ENCODE measurements at regions of chr16 and their contacts with region 1.

Region 1: GRCh38 chr16:4475880-4476788 is at the start of gene HMOX2:
- DNase-seq: peak; percentile 96
- ATAC-seq: peak; percentile 93
- H3K4me3 ChIP-seq: peak within 1 kb of the TSS; percentile 57 to 96 (median 86)
- H3K4me3 Mint-ChIP-seq: peak within 1 kb of the TSS; percentile 84
- H3K27ac ChIP-seq: peak within 1 kb of the TSS; percentile 28 to 78
- H3K27ac Mint-ChIP-seq: peak within 1 kb of the TSS; percentile 92
- H3K4me1 ChIP-seq: peaks cover 19 to 37% of the 10 kb centered on the region in 2 donors
- H3K4me1 Mint-ChIP-seq: peaks cover 34% of the 10 kb centered on the region
- H3K27me3 ChIP-seq: no peaks in the 10 kb centered on the region
- H3K27me3 Mint-ChIP-seq: no peaks in the 10 kb centered on the region
- CTCF ChIP-seq: peak; percentile 56
- total RNA-seq, gene HMOX2: 36.5 TPM in 2 replicates

Region 2: GRCh38 chr16:4416200-4417032 is 59.7 kb before region 1 on chr16 and contains the start of gene CORO7:
- CTCF ChIA-PET with region 1: interaction called, 3 read pairs
- POLR2A ChIA-PET with region 1: interaction called, 5 read pairs
- intact Hi-C with region 1: loop called (anchors 1 kb)
- DNase-seq: peak; percentile 99
- ATAC-seq: peak; percentile 90
- H3K4me3 ChIP-seq: peak within 1 kb of the TSS; percentile 62 to 94 (median 78)
- H3K4me3 Mint-ChIP-seq: peak within 1 kb of the TSS; percentile 96
- H3K27ac ChIP-seq: peak within 1 kb of the TSS; percentile 91 to 95
- H3K27ac Mint-ChIP-seq: peak within 1 kb of the TSS; percentile 95
- H3K4me1 ChIP-seq: peaks cover 24 to 35% of the 10 kb centered on the region in 2 donors
- H3K4me1 Mint-ChIP-seq: peaks cover 31% of the 10 kb centered on the region
- H3K27me3 ChIP-seq: no peaks in the 10 kb centered on the region
- H3K27me3 Mint-ChIP-seq: no peaks in the 10 kb centered on the region
- CTCF ChIP-seq: no peak
- total RNA-seq, gene CORO7: 114 and 117 TPM in 2 replicates

Region 3: GRCh38 chr16:4500272-4500671 is 24.1 kb after region 1 on chr16:
- CTCF ChIA-PET with region 1: interaction called, 70 read pairs
- POLR2A ChIA-PET with region 1: interaction called, 19 read pairs
- intact Hi-C with region 1: loop called (anchors 1 kb)
- DNase-seq: no peak
- ATAC-seq: no peak
- H3K4me3 ChIP-seq: no peak overlapping the region
- H3K4me3 Mint-ChIP-seq: no peak overlapping the region
- H3K27ac ChIP-seq: no peak overlapping the region
- H3K27ac Mint-ChIP-seq: no peak overlapping the region
- H3K4me1 ChIP-seq: peaks cover 22 to 29% of the 10 kb centered on the region in 2 donors
- H3K4me1 Mint-ChIP-seq: peaks cover 34% of the 10 kb centered on the region
- H3K27me3 ChIP-seq: no peaks in the 10 kb centered on the region
- H3K27me3 Mint-ChIP-seq: no peaks in the 10 kb centered on the region
- CTCF ChIP-seq: no peak

Region 4: GRCh38 chr16:4550591-4550990 is 74.5 kb after region 1 on chr16:
- CTCF ChIA-PET with region 1: interaction called, 11 read pairs
- POLR2A ChIA-PET with region 1: interaction called, 17 read pairs
- intact Hi-C with region 1: loop called (anchors 2 kb)
- DNase-seq: no peak
- ATAC-seq: no peak
- H3K4me3 ChIP-seq: no peak overlapping the region
- H3K4me3 Mint-ChIP-seq: no peak overlapping the region
- H3K27ac ChIP-seq: no peak overlapping the region
- H3K27ac Mint-ChIP-seq: peak overlapping the region; percentile 53
- H3K4me1 ChIP-seq: peaks cover 0 to 9% of the 10 kb centered on the region in 2 donors
- H3K4me1 Mint-ChIP-seq: peaks cover 3% of the 10 kb centered on the region
- H3K27me3 ChIP-seq: no peaks in the 10 kb centered on the region
- H3K27me3 Mint-ChIP-seq: peaks cover 6% of the 10 kb centered on the region
- CTCF ChIP-seq: no peak

Region 5: GRCh38 chr16:4624015-4624826 is 148.1 kb after region 1 on chr16 and contains the start of gene MGRN1:
- CTCF ChIA-PET with region 1: no interaction called
- POLR2A ChIA-PET with region 1: no interaction called
- intact Hi-C with region 1: no loop called
- DNase-seq: peak; percentile 96
- ATAC-seq: peak; percentile 91
- H3K4me3 ChIP-seq: peak within 1 kb of the TSS; percentile 67 to 90 (median 73)
- H3K4me3 Mint-ChIP-seq: peak within 1 kb of the TSS; percentile 100
- H3K27ac ChIP-seq: peak within 1 kb of the TSS; percentile 77 to 97
- H3K27ac Mint-ChIP-seq: peak within 1 kb of the TSS; percentile 98
- H3K4me1 ChIP-seq: peaks cover 18 to 27% of the 10 kb centered on the region in 2 donors
- H3K4me1 Mint-ChIP-seq: peaks cover 35% of the 10 kb centered on the region
- H3K27me3 ChIP-seq: no peaks in the 10 kb centered on the region
- H3K27me3 Mint-ChIP-seq: no peaks in the 10 kb centered on the region
- CTCF ChIP-seq: peak; percentile 86
- total RNA-seq, gene MGRN1: 89.2 and 89.8 TPM in 2 replicates

Region 6: DNA sequence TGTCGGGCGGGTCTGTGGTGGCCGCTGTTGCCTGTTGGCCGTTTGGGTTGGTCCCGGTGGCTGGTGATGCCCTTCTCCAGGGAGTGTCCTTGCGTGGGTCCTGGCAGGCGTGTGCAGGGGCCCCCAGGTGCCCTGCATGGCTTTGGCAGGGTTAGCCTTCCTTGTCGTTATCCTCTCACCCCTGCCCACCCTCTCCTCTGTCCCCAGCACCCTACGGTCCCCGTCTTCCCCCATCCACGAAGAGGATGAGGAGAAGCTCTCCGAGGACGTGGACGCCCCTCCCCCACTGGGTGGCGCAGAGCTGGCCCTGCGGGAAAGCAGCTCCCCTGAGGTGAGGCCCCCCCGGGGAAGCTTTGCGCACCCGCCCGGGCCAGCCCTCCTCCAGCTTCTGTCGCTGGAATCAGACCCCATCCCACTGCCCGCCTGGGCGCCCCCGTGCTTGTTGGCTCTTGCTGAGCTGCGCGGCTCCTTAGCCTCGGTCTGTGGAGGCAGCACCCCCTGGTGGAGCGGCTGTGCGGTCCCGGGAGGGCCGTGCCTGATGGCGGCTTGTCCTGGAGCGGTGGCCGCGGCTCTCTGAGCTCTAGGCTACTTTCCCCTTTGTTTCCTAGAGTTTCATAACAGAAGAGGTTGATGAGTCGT is 206.6 kb after region 1 on chr16:
- CTCF ChIA-PET with region 1: no interaction called
- POLR2A ChIA-PET with region 1: no interaction called
- intact Hi-C with region 1: no loop called
- DNase-seq: no peak
- ATAC-seq: no peak
- H3K4me3 ChIP-seq: no peak overlapping the region
- H3K4me3 Mint-ChIP-seq: no peak overlapping the region
- H3K27ac ChIP-seq: no peak overlapping the region
- H3K27ac Mint-ChIP-seq: no peak overlapping the region
- H3K4me1 ChIP-seq: no peaks in the 10 kb centered on the region
- H3K4me1 Mint-ChIP-seq: no peaks in the 10 kb centered on the region
- H3K27me3 ChIP-seq: no peaks in the 10 kb centered on the region
- H3K27me3 Mint-ChIP-seq: no peaks in the 10 kb centered on the region
- CTCF ChIP-seq: peak; percentile 16

Region 7: GRCh38 chr16:4693296-4693955 is 217.3 kb after region 1 on chr16 and contains the start of gene NUDT16L1:
- CTCF ChIA-PET with region 1: no interaction called
- POLR2A ChIA-PET with region 1: no interaction called
- intact Hi-C with region 1: loop called (anchors 2 kb)
- DNase-seq: peak; percentile 97
- ATAC-seq: peak; percentile 95
- H3K4me3 ChIP-seq: peak within 1 kb of the TSS; percentile 50 to 85 (median 81)
- H3K4me3 Mint-ChIP-seq: peak within 1 kb of the TSS; percentile 91
- H3K27ac ChIP-seq: peak within 1 kb of the TSS; percentile 34 to 87
- H3K27ac Mint-ChIP-seq: peak within 1 kb of the TSS; percentile 90
- H3K4me1 ChIP-seq: peaks cover 15 to 19% of the 10 kb centered on the region in 2 donors
- H3K4me1 Mint-ChIP-seq: peaks cover 22% of the 10 kb centered on the region
- H3K27me3 ChIP-seq: no peaks in the 10 kb centered on the region
- H3K27me3 Mint-ChIP-seq: no peaks in the 10 kb centered on the region
- CTCF ChIP-seq: no peak
- total RNA-seq, gene NUDT16L1: 38.5 and 43.2 TPM in 2 replicates

Measured in B cell (primary cell).